Transverse colon (tissue), 4 donors: ENCODE measurements at regions of chr2 and their contacts with region 1.

Region 1: DNA sequence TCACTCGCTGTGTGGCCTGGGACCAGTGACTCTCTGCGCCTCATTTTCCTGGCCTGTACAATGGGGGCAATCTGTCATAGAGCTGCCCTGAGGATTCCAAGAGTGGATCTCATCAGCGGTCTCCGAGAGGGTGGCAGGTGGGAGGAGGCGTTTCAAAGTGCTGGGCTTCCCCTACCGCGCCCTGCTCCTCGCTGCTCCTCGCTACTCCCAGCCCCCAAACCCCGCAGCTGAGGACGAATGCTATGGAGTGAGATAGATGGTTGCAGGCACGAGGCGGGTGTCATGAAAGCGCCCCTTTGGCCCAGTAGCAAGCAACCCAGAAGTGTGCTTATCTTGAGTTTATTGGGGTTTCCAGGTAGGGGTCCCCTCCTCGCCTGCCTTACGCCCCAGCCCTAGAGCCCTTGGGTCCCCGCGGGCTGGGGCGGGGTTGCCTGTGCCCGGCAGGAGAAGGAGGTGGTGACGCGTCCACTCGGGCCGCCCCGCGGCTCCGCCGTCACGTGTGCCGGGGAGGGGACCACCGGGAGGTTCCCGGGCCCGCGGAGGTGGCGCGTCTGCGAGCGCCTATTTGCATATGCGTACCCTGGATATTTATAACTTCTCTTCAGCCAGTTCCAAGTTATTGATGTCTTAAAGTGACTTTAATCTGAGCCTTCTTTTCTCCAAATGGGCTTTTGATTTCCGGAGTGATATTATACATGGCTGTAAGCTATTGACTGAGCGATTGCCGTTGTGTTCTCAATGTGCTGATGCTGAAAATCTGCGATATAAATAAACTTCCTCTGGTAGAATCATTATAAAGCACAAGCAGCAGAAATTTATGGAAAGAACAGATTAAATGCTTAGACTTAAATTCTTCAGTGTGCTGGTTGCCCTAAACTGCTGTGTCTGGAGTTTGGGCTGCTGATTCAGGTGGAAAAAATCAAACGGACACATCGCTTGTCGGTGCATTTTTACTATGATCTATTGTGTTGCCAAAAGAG is 263.7 kb downstream of the ATAD2B start:
- DNase-seq: peak; percentile 16
- H3K4me3 ChIP-seq: peak overlapping the region in 2 of 4 donors; percentile 3 to 26
- H3K27ac ChIP-seq: peak overlapping the region in 1 of 4 donors; percentile 25
- H3K4me1 ChIP-seq: peaks cover 0 to 10% (median 0%) of the 10 kb centered on the region in 4 donors
- H3K27me3 ChIP-seq: no peaks in the 10 kb centered on the region
- CTCF ChIP-seq: no peak
- EP300 ChIP-seq: no peak
- POLR2A ChIP-seq: no peak

Region 2: GRCh38 chr2:23753291-23754010 is 90.2 kb after region 1 on chr2:
- in situ Hi-C with region 1: no loop called
- intact Hi-C with region 1: loop called (anchors 5 kb)
- DNase-seq: no peak
- H3K4me3 ChIP-seq: no peak overlapping the region
- H3K27ac ChIP-seq: no peak overlapping the region
- H3K4me1 ChIP-seq: no peaks in the 10 kb centered on the region
- H3K27me3 ChIP-seq: no peaks in the 10 kb centered on the region
- CTCF ChIP-seq: no peak
- EP300 ChIP-seq: no peak
- POLR2A ChIP-seq: no peak

Region 3: GRCh38 chr2:24175631-24176187 is 512.5 kb after region 1 on chr2:
- in situ Hi-C with region 1: no loop called
- intact Hi-C with region 1: no loop called
- DNase-seq: no peak
- H3K4me3 ChIP-seq: no peak overlapping the region
- H3K27ac ChIP-seq: no peak overlapping the region
- H3K4me1 ChIP-seq: no peaks in the 10 kb centered on the region
- H3K27me3 ChIP-seq: no peaks in the 10 kb centered on the region
- CTCF ChIP-seq: no peak
- EP300 ChIP-seq: no peak
- POLR2A ChIP-seq: no peak